Activated CD4-positive, alpha-beta T cell treated with anti-CD3 and anti-CD28 coated beads for 36 hours (primary cell): ENCODE measurements at regions of chr3 and their contacts with region 1.

Region 1: GRCh38 chr3:71583566-71584449 is at the start of gene FOXP1:
- DNase-seq: peak; percentile 79
- ATAC-seq: peak; percentile 49
- H3K4me3 Mint-ChIP-seq: peak within 1 kb of the TSS; percentile 91
- H3K27ac Mint-ChIP-seq: peak within 1 kb of the TSS; percentile 95
- H3K4me1 Mint-ChIP-seq: peaks cover 53% of the 10 kb centered on the region
- H3K27me3 Mint-ChIP-seq: no peaks in the 10 kb centered on the region
- total RNA-seq, gene FOXP1: 108 to 153 TPM

Region 2: GRCh38 chr3:70771426-70772147 is 812.2 kb before region 1 on chr3:
- CTCF ChIA-PET with region 1: no interaction called
- POLR2A ChIA-PET with region 1: no interaction called
- intact Hi-C with region 1: loop called in 1 of 2 experiments (anchors 5 kb)
- DNase-seq: no peak
- ATAC-seq: peak; percentile 70
- H3K4me3 Mint-ChIP-seq: no peak overlapping the region
- H3K27ac Mint-ChIP-seq: no peak overlapping the region
- H3K4me1 Mint-ChIP-seq: peaks cover 12% of the 10 kb centered on the region
- H3K27me3 Mint-ChIP-seq: peaks cover 43% of the 10 kb centered on the region

Region 3: GRCh38 chr3:71087143-71088018 is 496.4 kb before region 1 on chr3:
- CTCF ChIA-PET with region 1: no interaction called
- POLR2A ChIA-PET with region 1: interaction called, 4 read pairs
- intact Hi-C with region 1: loop called in 1 of 2 experiments (anchors 2 kb)
- DNase-seq: peak; percentile 61
- ATAC-seq: peak; percentile 74
- H3K4me3 Mint-ChIP-seq: peak overlapping the region; percentile 52
- H3K27ac Mint-ChIP-seq: peak overlapping the region; percentile 93
- H3K4me1 Mint-ChIP-seq: peaks cover 94% of the 10 kb centered on the region
- H3K27me3 Mint-ChIP-seq: no peaks in the 10 kb centered on the region

Region 4: DNA sequence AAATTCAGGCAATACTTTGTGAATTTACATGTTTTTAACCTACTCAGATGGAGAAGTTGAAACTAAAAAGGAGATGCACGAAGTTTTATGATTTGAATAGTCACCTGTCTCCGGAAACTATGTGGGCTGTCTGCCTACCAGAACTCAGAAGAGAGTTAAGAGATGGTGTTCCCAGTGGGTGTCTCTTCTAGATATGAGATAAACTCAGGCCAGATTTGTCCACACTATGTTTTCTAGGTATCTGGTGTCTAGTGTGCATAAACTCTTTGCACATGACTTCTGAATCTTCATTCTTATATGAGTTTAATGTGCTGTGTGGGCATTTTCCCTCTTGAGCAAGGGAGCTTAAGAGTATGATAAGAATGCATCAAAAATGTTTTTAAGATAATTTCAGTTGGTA is 223.0 kb before region 1 on chr3:
- CTCF ChIA-PET with region 1: interaction called, 3 read pairs
- POLR2A ChIA-PET with region 1: interaction called, 8 read pairs
- intact Hi-C with region 1: loop called (anchors 1 kb)
- DNase-seq: peak; percentile 48
- ATAC-seq: peak; percentile 67
- H3K4me3 Mint-ChIP-seq: peak overlapping the region; percentile 50
- H3K27ac Mint-ChIP-seq: peak overlapping the region; percentile 88
- H3K4me1 Mint-ChIP-seq: peaks cover 86% of the 10 kb centered on the region
- H3K27me3 Mint-ChIP-seq: no peaks in the 10 kb centered on the region

Region 5: GRCh38 chr3:71428841-71429596 is 154.8 kb before region 1 on chr3:
- CTCF ChIA-PET with region 1: interaction called, 4 read pairs
- POLR2A ChIA-PET with region 1: interaction called, 13 read pairs
- intact Hi-C with region 1: no loop called
- DNase-seq: no peak
- ATAC-seq: no peak
- H3K4me3 Mint-ChIP-seq: peak overlapping the region; percentile 38
- H3K27ac Mint-ChIP-seq: peak overlapping the region; percentile 76
- H3K4me1 Mint-ChIP-seq: peaks cover 96% of the 10 kb centered on the region
- H3K27me3 Mint-ChIP-seq: no peaks in the 10 kb centered on the region

Region 6: GRCh38 chr3:71478568-71478967 is 105.2 kb before region 1 on chr3:
- CTCF ChIA-PET with region 1: no interaction called
- POLR2A ChIA-PET with region 1: no interaction called
- intact Hi-C with region 1: no loop called
- DNase-seq: peak; percentile 89
- ATAC-seq: peak; percentile 98
- H3K4me3 Mint-ChIP-seq: peak overlapping the region; percentile 19
- H3K27ac Mint-ChIP-seq: peak overlapping the region; percentile 93
- H3K4me1 Mint-ChIP-seq: peaks cover 78% of the 10 kb centered on the region
- H3K27me3 Mint-ChIP-seq: no peaks in the 10 kb centered on the region

Region 7: DNA sequence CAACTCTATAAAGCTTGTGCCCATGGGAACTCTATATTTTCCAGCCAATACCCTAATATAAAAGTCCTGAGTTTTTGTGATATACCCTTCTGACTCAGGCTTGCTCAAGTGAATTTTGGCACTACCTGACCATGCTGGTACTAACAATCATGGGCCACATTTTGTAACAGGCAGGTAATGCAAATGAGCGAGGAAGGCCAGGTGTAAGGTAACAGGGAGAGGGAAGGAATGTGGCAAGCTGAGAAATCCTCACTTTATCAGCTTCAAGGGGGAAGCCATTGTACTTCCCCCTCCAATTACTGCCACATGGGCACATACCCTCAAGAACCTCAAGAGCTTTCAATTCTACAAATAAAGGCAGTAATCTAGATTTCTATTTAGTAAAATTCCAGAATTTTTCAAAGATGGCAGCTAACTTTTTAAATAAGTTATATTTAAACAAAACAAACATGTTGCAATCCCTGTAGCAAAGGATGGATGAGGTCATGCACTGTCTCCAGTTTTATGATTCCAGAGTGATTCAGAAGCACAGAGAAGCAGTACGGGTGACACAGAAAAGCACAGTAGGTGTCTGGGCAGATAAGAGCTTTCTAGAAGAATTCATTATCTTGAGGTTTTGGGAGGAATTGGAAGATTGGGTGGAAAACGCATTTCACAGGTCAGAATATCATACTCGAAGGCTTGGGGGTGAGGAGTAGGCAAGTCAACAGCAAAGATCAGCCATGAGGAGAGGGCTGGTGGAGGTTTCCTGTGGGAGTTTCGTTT is 87.9 kb before region 1 on chr3:
- CTCF ChIA-PET with region 1: interaction called, 4 read pairs
- POLR2A ChIA-PET with region 1: no interaction called
- intact Hi-C with region 1: loop called in 1 of 2 experiments (anchors 5 kb)
- DNase-seq: peak; percentile 47
- ATAC-seq: peak; percentile 71
- H3K4me3 Mint-ChIP-seq: peak overlapping the region; percentile 56
- H3K27ac Mint-ChIP-seq: peak overlapping the region; percentile 89
- H3K4me1 Mint-ChIP-seq: peaks cover 75% of the 10 kb centered on the region
- H3K27me3 Mint-ChIP-seq: no peaks in the 10 kb centered on the region

Region 8: GRCh38 chr3:71616571-71617101 is 32.8 kb after region 1 on chr3:
- CTCF ChIA-PET with region 1: no interaction called
- POLR2A ChIA-PET with region 1: no interaction called
- intact Hi-C with region 1: no loop called
- DNase-seq: peak; percentile 10
- ATAC-seq: peak; percentile 69
- H3K4me3 Mint-ChIP-seq: no peak overlapping the region
- H3K27ac Mint-ChIP-seq: no peak overlapping the region
- H3K4me1 Mint-ChIP-seq: peaks cover 6% of the 10 kb centered on the region
- H3K27me3 Mint-ChIP-seq: no peaks in the 10 kb centered on the region

Region 9: GRCh38 chr3:71695000-71695482 is 111.2 kb after region 1 on chr3:
- CTCF ChIA-PET with region 1: no interaction called
- POLR2A ChIA-PET with region 1: no interaction called
- intact Hi-C with region 1: no loop called
- DNase-seq: no peak
- ATAC-seq: no peak
- H3K4me3 Mint-ChIP-seq: no peak overlapping the region
- H3K27ac Mint-ChIP-seq: no peak overlapping the region
- H3K4me1 Mint-ChIP-seq: peaks cover under 1% of the 10 kb centered on the region
- H3K27me3 Mint-ChIP-seq: no peaks in the 10 kb centered on the region